Activated CD4-positive, alpha-beta T cell treated with anti-CD3 and anti-CD28 coated beads for 36 hours (primary cell): ENCODE measurements at regions of chr7 and their contacts with region 1.

Region 1: DNA sequence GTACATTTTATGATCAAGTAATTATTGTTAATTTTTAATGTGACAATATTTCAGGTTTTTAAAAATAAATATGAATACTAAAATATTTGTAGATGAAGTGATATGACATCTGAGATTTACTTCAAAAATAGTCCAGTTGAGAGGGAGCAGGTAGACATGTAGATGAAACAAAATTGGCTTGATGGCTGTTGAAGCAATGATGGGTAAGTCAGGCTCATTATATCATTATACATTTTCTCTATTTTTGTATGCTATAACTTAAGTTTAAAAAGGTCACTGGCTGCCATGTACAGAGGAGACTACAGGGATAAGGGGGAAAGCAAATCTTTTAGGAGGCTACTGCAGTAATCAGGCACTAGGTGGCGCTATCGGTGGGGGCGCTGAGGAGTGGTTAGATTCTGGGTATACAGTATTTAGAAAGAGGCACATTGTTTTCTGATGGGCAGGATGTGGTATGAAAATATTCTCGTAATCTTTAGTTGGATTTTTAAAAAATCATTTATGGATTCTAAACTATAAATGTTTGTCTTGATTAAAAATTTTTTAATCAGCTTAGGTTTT is 189.8 kb upstream of the IMMP2L start:
- DNase-seq: peak; percentile 84
- ATAC-seq: peak; percentile 78
- H3K4me3 Mint-ChIP-seq: no peak overlapping the region
- H3K27ac Mint-ChIP-seq: no peak overlapping the region
- H3K4me1 Mint-ChIP-seq: no peaks in the 10 kb centered on the region
- H3K27me3 Mint-ChIP-seq: peaks cover 5% of the 10 kb centered on the region

Region 2: DNA sequence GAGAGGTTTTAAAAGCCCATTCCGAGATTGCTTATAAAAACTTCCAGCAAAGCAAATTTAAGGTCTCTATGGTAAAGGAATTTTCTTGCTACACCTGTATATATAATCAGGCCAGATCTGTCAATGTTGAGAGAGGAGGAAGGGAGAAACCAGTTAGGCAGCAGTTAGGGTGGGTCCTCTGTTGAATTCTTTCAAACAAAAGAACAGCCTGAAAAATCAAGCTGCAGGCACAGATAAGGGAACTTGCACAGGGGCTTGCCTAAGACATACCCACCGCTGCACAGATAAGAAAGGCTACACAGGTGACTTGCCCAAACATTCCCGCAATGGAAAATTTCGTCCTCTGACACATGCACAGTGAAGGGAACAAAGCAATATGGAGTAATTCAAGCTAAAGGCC is 130.0 kb before region 1 on chr7:
- CTCF ChIA-PET with region 1: no interaction called
- POLR2A ChIA-PET with region 1: no interaction called
- intact Hi-C with region 1: no loop called
- DNase-seq: no peak
- ATAC-seq: no peak
- H3K4me3 Mint-ChIP-seq: no peak overlapping the region
- H3K27ac Mint-ChIP-seq: no peak overlapping the region
- H3K4me1 Mint-ChIP-seq: no peaks in the 10 kb centered on the region
- H3K27me3 Mint-ChIP-seq: peaks cover 6% of the 10 kb centered on the region

Region 3: GRCh38 chr7:111741811-111742240 is 10.3 kb before region 1 on chr7:
- CTCF ChIA-PET with region 1: interaction called, 11 read pairs
- POLR2A ChIA-PET with region 1: no interaction called
- intact Hi-C with region 1: no loop called
- DNase-seq: peak; percentile 55
- ATAC-seq: peak; percentile 86
- H3K4me3 Mint-ChIP-seq: no peak overlapping the region
- H3K27ac Mint-ChIP-seq: no peak overlapping the region
- H3K4me1 Mint-ChIP-seq: no peaks in the 10 kb centered on the region
- H3K27me3 Mint-ChIP-seq: peaks cover 2% of the 10 kb centered on the region

Region 4: DNA sequence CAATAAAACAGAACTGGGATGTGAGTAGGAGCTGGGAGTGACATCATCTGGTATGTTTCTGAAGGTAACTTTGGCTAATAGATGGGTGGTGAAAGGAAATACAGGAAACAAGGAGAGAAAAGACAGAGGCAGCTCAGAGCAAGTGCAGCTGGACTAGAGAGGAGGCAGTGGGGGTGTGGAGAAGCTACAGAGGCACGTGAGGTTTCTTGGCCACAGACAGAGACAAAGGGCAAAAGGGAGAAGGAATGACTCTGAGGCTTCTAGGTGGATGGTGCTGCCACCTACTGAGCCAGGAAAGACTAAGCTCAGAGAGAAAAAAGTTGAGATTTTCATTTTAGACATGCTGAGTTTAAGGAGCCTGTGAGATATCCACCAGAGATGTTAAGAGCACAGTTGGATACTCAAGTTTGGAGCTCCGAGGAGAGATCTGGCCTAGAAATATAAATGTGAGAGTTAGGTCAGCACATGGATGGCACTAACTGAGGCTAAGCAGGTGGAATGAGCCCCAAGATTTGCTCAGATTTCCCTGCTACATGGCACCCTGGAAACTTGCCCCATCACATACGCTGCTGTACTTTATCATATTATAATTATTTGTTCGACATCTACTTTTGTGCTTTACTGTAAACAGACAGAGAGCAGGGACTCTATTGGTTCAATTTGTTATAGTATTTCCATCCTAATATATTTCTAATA is 103.2 kb after region 1 on chr7:
- CTCF ChIA-PET with region 1: interaction called, 8 read pairs
- POLR2A ChIA-PET with region 1: no interaction called
- intact Hi-C with region 1: loop called (anchors 2 to 5 kb)
- DNase-seq: peak; percentile 28
- ATAC-seq: peak; percentile 69
- H3K4me3 Mint-ChIP-seq: no peak overlapping the region
- H3K27ac Mint-ChIP-seq: no peak overlapping the region
- H3K4me1 Mint-ChIP-seq: no peaks in the 10 kb centered on the region
- H3K27me3 Mint-ChIP-seq: peaks cover 6% of the 10 kb centered on the region

Region 5: GRCh38 chr7:112080441-112080840 is 328.3 kb after region 1 on chr7:
- CTCF ChIA-PET with region 1: no interaction called
- POLR2A ChIA-PET with region 1: no interaction called
- intact Hi-C with region 1: loop called in 1 of 2 experiments (anchors 10 kb)
- DNase-seq: no peak
- ATAC-seq: no peak
- H3K4me3 Mint-ChIP-seq: no peak overlapping the region
- H3K27ac Mint-ChIP-seq: no peak overlapping the region
- H3K4me1 Mint-ChIP-seq: peaks cover 3% of the 10 kb centered on the region
- H3K27me3 Mint-ChIP-seq: peaks cover 18% of the 10 kb centered on the region

Region 6: DNA sequence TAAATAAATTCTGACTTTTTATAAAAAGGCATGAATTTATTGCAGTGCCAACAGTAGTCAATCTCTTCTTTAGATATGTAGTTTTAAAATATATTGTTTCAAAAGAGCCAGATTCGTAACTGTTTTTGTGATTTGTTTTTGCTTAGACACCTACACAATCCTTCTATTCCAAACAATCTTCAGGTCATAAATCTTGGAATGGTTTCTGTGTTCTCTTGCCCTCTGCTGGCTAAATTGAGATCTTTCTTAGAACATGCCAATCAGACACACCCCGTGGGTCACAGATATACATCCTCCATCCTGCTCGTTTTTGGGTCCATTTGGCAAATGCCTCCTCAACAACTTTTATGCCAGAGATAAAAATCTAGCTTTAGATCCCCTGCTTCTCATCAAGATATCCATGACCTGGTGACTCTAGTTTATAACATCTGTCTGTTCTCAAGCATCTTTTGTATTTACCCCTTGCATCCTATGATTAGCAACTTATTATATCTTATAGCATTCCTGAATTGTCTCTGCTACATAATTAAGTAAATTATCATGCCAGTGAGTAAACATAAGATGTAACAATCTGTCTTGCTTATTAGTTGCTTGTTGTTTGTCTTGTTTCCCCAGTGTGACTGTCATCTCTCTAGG is 662.9 kb after region 1 on chr7:
- CTCF ChIA-PET with region 1: no interaction called
- POLR2A ChIA-PET with region 1: no interaction called
- intact Hi-C with region 1: loop called (anchors 2 to 5 kb)
- DNase-seq: no peak
- ATAC-seq: no peak
- H3K4me3 Mint-ChIP-seq: no peak overlapping the region
- H3K27ac Mint-ChIP-seq: no peak overlapping the region
- H3K4me1 Mint-ChIP-seq: peaks cover 7% of the 10 kb centered on the region
- H3K27me3 Mint-ChIP-seq: peaks cover 6% of the 10 kb centered on the region

Region 7: GRCh38 chr7:112495810-112496462 is 743.8 kb after region 1 on chr7:
- CTCF ChIA-PET with region 1: interaction called, 15 read pairs
- POLR2A ChIA-PET with region 1: no interaction called
- intact Hi-C with region 1: loop called in 1 of 2 experiments (anchors 1 kb)
- DNase-seq: peak; percentile 58
- ATAC-seq: no peak
- H3K4me3 Mint-ChIP-seq: no peak overlapping the region
- H3K27ac Mint-ChIP-seq: no peak overlapping the region
- H3K4me1 Mint-ChIP-seq: no peaks in the 10 kb centered on the region
- H3K27me3 Mint-ChIP-seq: peaks cover 4% of the 10 kb centered on the region

Region 8: DNA sequence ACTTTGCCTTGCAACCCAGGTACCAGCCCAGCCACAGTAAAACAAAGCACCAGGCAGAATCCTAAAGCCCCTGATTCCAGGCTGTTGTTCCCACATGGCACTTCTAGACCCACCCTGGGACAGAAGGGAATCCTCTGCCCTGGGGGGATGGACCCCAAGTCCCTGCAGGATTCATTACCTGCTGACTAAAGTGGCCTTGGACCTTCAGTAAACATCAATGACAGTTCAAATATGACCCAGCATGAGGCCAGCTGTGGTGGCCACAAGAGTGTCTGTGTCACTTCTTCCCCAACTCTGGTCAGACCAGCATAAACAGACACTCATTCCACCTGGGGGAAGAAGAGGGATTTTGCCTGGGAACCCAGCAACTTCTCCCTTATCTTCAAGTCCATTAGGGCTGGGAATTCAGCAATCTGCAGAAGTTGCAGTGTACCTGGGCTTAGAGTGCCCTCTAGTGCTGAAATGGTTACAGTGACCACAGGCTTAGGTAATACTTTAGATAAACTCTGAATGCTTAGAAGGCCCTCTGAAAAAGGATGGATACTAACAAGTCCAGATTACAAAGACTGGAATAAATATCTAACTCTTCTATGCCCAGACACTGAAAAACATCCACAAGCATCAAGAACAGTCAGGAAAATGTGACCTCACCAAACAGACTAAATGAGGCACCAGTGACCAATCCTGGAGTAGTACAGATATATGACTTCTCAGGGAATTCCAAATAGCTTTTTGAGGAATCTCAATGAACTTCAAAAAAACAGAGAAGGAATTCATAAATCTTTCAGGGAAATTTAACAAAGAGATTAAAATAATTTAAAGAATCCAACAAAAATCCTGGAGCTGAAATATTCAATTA is 1146.6 kb after region 1 on chr7:
- CTCF ChIA-PET with region 1: no interaction called
- POLR2A ChIA-PET with region 1: no interaction called
- intact Hi-C with region 1: loop called in 1 of 2 experiments (anchors 10 kb)
- DNase-seq: peak; percentile 56
- ATAC-seq: peak; percentile 60
- H3K4me3 Mint-ChIP-seq: no peak overlapping the region
- H3K27ac Mint-ChIP-seq: no peak overlapping the region
- H3K4me1 Mint-ChIP-seq: peaks cover 2% of the 10 kb centered on the region
- H3K27me3 Mint-ChIP-seq: no peaks in the 10 kb centered on the region